ENCODE measurements at regions of chr9 and their contacts with region 1.

Region 1: GRCh38 chr9:19342947-19343346 is 37.1 kb downstream of the RPS6 start:
- DNase-seq: peak; percentile 69
- H3K4me3 ChIP-seq: no peak overlapping the region
- H3K27ac ChIP-seq: peak overlapping the region; percentile 79
- H3K4me1 ChIP-seq: peaks cover 13% of the 10 kb centered on the region
- H3K27me3 ChIP-seq: no peaks in the 10 kb centered on the region
- CTCF ChIP-seq: no peak
- POLR2A ChIP-seq: no peak

Region 2: GRCh38 chr9:18847576-18848275 is 495.2 kb before region 1 on chr9:
- CTCF ChIA-PET with region 1: no interaction called
- POLR2A ChIA-PET with region 1: interaction called, 13 read pairs
- dilution Hi-C with region 1: no loop called
- intact Hi-C with region 1: no loop called
- DNase-seq: no peak
- H3K4me3 ChIP-seq: no peak overlapping the region
- H3K27ac ChIP-seq: no peak overlapping the region
- H3K4me1 ChIP-seq: no peaks in the 10 kb centered on the region
- H3K27me3 ChIP-seq: no peaks in the 10 kb centered on the region
- CTCF ChIP-seq: no peak
- POLR2A ChIP-seq: no peak

Region 3: DNA sequence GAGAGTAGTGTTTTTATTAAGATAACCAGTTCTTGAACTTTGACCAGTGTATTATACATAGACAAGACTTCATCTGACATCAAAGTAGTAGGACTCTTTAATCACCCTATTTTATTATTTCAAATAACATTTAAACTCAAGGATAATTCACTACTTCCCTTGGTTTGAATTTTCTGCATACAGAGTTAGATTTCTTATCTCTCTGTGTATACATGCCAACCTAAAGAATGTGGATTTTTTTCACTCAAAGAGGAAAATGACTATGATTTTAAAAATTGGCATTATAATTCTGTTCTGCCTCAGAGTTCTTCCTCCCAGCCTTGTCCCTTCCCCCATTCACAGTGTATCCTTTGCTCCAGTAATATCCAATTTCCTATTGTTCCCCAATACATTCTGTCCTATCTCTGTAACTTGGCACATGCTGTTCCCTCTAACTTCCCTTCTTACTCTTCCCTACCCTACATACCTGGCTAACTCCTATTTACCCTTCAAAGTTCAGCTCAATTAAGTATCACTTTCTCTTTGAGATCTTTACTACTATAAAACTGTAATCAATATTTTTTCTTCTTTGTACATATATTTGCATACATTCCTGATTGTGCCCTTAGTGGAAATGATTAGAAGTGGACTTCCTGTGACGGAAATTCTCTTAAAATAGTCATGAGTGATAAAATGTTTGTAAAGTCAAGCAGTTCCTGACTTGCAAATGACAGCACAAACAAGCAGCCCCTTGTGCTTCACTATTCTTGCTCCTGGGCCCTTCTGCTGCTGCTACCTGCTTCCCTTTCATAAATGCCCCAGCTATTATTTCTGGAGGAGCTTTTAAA is 150.5 kb before region 1 on chr9:
- CTCF ChIA-PET with region 1: no interaction called
- POLR2A ChIA-PET with region 1: no interaction called
- dilution Hi-C with region 1: no loop called
- intact Hi-C with region 1: loop called (anchors 1 kb)
- DNase-seq: peak; percentile 58
- H3K4me3 ChIP-seq: peak overlapping the region in 1 of 3 experiments; percentile 51
- H3K27ac ChIP-seq: peak overlapping the region; percentile 58
- H3K4me1 ChIP-seq: peaks cover 20% of the 10 kb centered on the region
- H3K27me3 ChIP-seq: no peaks in the 10 kb centered on the region
- CTCF ChIP-seq: no peak
- POLR2A ChIP-seq: no peak

Region 4: GRCh38 chr9:19618816-19619215 is 275.9 kb after region 1 on chr9:
- CTCF ChIA-PET with region 1: no interaction called
- POLR2A ChIA-PET with region 1: no interaction called
- dilution Hi-C with region 1: no loop called
- intact Hi-C with region 1: no loop called
- DNase-seq: no peak
- H3K4me3 ChIP-seq: no peak overlapping the region
- H3K27ac ChIP-seq: no peak overlapping the region
- H3K4me1 ChIP-seq: no peaks in the 10 kb centered on the region
- H3K27me3 ChIP-seq: no peaks in the 10 kb centered on the region
- CTCF ChIP-seq: no peak
- POLR2A ChIP-seq: no peak